Activated CD4-positive, alpha-beta memory T cell treated with anti-CD3 and anti-CD28 coated beads, Interleukin-2, amount 10 ng/mL, durations not matched to agents 7 days and 5 days (primary cell): ENCODE measurements at regions of chr5 and their contacts with region 1.

Region 1: DNA sequence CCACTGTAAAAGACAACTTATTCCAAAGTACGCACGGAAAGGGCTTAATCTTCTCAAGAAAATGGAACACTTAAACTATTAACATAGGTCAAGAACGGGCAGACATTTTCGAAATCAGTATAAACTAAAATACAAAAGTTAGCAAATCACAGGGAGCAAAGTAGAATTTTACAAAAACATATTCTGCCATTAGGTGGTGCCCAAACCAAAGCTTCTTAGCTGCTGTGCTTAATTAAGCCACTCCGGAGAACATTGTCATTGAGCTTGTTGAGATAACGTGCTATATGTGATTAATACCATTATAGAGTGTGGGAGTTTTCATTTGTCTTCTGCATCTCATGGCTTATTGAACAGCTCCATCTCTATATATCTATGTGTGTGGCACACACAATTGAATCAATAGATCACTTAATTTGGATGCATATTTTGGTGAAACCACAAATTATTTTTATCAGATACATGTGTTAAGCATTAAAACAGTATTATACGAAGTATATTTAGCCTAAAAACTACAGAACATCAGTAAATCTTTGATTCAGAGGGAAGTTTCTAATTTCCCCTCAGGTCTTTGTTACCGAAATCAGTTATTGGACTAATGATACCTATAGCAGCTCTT is 23.4 kb downstream of the UBLCP1 start:
- DNase-seq: no peak
- H3K4me3 Mint-ChIP-seq: no peak overlapping the region
- H3K27ac Mint-ChIP-seq: no peak overlapping the region
- H3K4me1 Mint-ChIP-seq: no peaks in the 10 kb centered on the region
- H3K27me3 Mint-ChIP-seq: no peaks in the 10 kb centered on the region

Region 2: GRCh38 chr5:159198063-159199036 is 88.2 kb before region 1 on chr5:
- CTCF ChIA-PET with region 1: no interaction called
- POLR2A ChIA-PET with region 1: no interaction called
- DNase-seq: no peak
- H3K4me3 Mint-ChIP-seq: no peak overlapping the region
- H3K27ac Mint-ChIP-seq: peak overlapping the region; percentile 70
- H3K4me1 Mint-ChIP-seq: peaks cover 46% of the 10 kb centered on the region
- H3K27me3 Mint-ChIP-seq: no peaks in the 10 kb centered on the region

Region 3: DNA sequence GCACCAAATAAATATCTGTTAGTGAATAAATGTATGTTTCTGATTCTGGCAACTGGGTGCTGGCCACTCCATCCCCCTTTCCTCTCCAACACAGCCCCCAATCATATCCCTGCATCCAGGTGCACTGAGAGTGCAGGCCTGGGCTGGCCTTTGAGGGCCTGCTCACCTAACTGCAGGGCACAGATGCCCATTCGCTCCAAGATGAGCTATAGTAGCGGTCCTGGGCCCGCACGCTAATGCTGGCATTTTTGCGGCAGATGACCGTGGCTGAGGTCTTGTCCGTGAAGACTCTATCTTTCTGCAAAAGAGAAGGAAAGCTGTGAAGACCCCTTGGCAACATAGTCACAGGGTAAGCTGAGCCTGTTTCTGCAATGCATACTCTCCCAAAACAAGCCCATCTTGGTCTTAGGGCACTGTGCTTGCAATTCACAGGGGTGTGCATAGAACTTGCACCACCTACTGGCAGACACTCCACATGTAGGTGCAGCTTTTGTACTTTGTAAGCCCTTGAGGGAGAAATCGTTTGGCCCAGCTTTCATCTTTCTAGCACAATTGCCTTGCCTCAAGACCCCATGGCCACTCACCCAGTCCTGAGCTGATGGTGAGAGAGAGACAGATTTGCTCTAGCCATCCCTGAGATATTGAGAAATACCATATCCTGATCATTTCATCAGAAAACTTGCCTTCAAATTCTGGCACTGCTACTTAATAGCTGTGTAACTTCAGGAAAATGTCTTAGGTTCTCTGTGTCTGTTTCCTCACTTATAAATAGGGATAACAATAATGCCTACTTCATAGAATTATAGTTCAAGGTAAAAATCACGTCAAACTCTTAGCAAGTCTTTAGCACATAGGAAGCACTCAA is 30.2 kb after region 1 on chr5:
- CTCF ChIA-PET with region 1: interaction called, 29 read pairs
- POLR2A ChIA-PET with region 1: no interaction called
- DNase-seq: peak; percentile 56
- H3K4me3 Mint-ChIP-seq: no peak overlapping the region
- H3K27ac Mint-ChIP-seq: no peak overlapping the region
- H3K4me1 Mint-ChIP-seq: no peaks in the 10 kb centered on the region
- H3K27me3 Mint-ChIP-seq: peaks cover 21% of the 10 kb centered on the region

Region 4: DNA sequence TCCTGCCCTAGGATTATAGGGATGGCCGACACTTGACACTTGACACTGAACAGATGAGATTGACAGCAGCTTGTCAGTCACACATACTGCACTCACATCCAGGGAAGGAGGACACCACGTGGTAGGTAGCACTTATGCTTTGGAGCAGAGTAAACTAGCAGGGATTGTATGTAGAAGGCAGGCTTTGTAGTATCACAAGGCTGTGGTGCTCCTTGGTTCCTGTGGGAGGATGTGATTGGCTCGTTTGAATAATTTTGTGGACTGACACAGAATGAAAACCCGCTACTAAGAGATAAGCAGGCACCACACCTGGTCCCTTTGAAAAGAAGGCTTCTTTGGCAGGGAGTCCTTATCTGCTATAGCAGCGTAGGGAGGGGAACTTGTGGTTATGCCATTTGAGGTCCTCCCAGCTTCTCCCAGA is 107.3 kb after region 1 on chr5:
- CTCF ChIA-PET with region 1: no interaction called
- POLR2A ChIA-PET with region 1: no interaction called
- DNase-seq: no peak
- H3K4me3 Mint-ChIP-seq: no peak overlapping the region
- H3K27ac Mint-ChIP-seq: no peak overlapping the region
- H3K4me1 Mint-ChIP-seq: peaks cover 4% of the 10 kb centered on the region
- H3K27me3 Mint-ChIP-seq: peaks cover 37% of the 10 kb centered on the region